ENCODE measurements at regions of chr15 and their contacts with region 1.

Region 1: GRCh38 chr15:52780172-52780980 is 9.8 kb downstream of the ONECUT1 start:
- DNase-seq: peak in 8 of 10 donors; percentile 55 to 94 (median 78)

Region 2: DNA sequence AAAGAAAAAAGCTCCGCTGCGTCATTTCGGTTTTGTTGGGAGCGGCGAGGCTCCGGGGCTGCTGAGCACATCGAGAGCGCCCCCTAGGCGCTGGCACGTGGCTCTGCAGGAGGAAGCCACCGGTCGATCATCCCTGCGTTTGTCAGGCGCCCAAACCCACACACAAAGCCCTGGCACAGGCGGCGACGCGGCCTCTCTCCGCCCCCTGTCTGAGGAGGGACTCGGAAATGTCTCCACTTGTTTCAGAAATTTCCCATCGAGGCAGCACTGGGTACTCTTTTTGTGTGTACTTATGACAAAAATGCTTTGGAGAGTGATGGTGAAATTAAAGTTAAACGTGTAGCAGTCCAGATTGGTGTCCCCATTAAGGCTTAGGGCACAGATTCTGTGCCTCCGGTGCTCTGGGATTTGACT is 417.1 kb after region 1 on chr15:
- intact Hi-C with region 1: loop called (anchors 2 kb)
- DNase-seq: peak; percentile 35 to 95 (median 70)

Region 3: DNA sequence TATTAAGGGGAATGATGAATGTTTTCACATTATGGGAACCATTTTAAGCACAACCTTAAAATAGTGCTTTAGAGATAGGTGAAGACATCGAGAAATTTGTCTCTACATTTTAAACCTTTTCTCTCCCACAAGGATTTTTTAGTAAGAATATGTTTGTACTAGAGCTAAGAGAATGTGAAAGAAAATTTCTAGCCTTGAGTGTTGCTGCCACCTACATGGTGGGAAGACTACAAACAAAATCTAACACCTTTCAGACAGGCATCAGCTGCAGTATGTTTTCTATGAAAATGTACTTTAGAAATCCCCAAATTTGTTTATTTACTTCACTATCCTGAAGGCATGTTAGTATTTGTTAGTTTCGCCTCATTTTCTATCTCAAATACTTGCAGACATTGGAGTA is 731.7 kb after region 1 on chr15:
- intact Hi-C with region 1: loop called (anchors 10 kb)
- DNase-seq: no peak

Region 4: DNA sequence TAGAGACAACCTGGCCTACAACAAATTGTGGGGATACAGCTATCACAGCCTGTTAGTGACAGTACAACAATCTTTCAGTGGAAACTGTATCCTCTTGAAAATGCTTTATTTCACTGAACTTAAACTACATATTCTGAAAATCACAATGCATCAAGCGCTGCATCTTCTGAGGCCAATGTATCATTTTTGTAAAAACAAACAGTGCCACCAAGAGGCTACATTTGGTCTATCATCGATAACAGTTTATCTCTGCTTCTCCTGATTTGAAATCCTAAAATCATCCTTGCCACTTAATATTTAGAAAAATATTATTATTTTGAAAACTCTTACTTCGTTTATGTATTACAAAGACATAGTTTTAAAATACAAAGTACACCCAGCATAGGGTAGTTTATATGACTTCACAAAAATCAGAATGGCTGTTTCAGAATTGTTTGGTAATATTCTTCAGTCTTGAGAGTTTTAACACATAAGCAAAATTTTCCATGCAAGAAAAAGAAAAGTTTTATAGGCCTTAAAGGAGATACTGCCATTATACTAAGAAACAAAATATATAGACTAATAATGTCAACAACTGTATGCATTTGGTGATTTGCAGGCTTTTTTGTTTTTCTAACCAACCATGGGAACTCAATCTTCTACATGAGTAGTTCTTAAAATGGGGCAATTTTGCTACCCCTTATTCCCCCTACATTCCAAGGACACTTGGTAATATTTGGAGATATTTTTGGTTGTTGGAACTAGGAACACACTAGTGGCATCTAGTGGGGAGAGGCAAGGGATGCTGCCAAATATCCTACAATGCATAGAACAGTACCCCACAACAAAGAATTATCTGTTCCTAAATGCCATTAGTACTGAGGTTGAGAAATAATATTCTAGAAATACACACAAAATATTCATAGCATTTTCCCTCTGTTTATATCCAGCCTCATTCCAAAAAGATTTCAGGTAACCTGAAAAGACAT is 936.8 kb after region 1 on chr15:
- intact Hi-C with region 1: loop called (anchors 5 kb)
- DNase-seq: no peak